ENCODE measurements at regions of chr12 and their contacts with region 1.

Region 1: GRCh38 chr12:104132351-104132956 is 5.6 kb downstream of the NFYB start:
- DNase-seq: no peak
- ATAC-seq: no peak
- H3K4me3 ChIP-seq: no peak overlapping the region
- H3K27ac ChIP-seq: no peak overlapping the region
- H3K4me1 ChIP-seq: peaks cover 25% of the 10 kb centered on the region
- H3K27me3 ChIP-seq: no peaks in the 10 kb centered on the region
- CTCF ChIP-seq: no peak
- POLR2A ChIP-seq: no peak
- RAD21 ChIP-seq: no peak

Region 2: GRCh38 chr12:103858953-103859601 is 273.4 kb before region 1 on chr12:
- CTCF ChIA-PET with region 1: no interaction called
- POLR2A ChIA-PET with region 1: no interaction called
- dilution Hi-C with region 1: no loop called
- in situ Hi-C with region 1: no loop called
- intact Hi-C with region 1: no loop called
- DNase-seq: peak; percentile 98
- ATAC-seq: peak; percentile 97
- H3K4me3 ChIP-seq: no peak overlapping the region
- H3K27ac ChIP-seq: peak overlapping the region; percentile 95
- H3K4me1 ChIP-seq: peaks cover 14% of the 10 kb centered on the region
- H3K27me3 ChIP-seq: no peaks in the 10 kb centered on the region
- CTCF ChIP-seq: no peak
- POLR2A ChIP-seq: peak; percentile 64; the same call in 1 of the 2 replicates
- RAD21 ChIP-seq: peak; percentile 18; the same call in 1 of the 2 replicates

Region 3: DNA sequence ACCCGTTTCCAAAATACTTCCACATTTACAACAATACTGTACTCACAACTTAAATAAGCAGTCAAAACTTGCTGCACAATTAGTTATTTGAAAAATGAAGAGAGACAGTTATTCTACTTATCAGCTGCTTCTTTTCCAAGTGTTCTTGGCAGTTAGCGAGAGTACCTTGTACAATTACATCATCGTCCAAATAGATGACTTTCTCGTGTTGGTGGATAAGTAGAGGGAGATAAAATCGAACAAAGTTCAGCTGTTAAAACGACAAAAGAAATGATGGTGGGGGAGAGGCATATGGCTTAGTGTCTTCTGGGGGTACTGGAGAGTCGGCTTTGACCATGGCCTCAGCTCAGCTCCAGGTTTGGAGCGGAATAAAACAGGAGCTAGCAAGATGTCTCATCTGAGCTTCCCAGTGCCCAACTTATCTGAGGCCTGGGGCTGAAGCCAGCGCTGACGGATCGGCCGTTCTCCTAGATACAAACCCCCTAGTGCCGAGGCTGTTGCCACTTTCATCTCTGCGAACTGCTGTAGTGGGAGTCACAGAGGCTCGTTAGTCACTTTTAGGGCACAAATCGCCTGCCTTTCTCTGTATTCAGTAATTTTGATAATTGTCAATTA is 135.1 kb before region 1 on chr12:
- CTCF ChIA-PET with region 1: interaction called, 15 read pairs
- POLR2A ChIA-PET with region 1: no interaction called
- dilution Hi-C with region 1: no loop called
- in situ Hi-C with region 1: no loop called
- intact Hi-C with region 1: no loop called
- DNase-seq: peak; percentile 22
- ATAC-seq: no peak; the same call in 1 of the 2 replicates
- H3K4me3 ChIP-seq: no peak overlapping the region
- H3K27ac ChIP-seq: no peak overlapping the region
- H3K4me1 ChIP-seq: no peaks in the 10 kb centered on the region
- H3K27me3 ChIP-seq: no peaks in the 10 kb centered on the region
- CTCF ChIP-seq: no peak
- POLR2A ChIP-seq: no peak
- RAD21 ChIP-seq: no peak